ENCODE measurements at regions of chr10 and their contacts with region 1.

Region 1: GRCh38 chr10:102713814-102714620 is at the start of gene ARL3:
- DNase-seq: peak; percentile 93 to 97 (median 95)
- ATAC-seq: peak; percentile 91
- H3K4me3 ChIP-seq: peak within 1 kb of the TSS; percentile 95
- H3K27ac ChIP-seq: peak within 1 kb of the TSS; percentile 83
- H3K4me1 ChIP-seq: peaks cover 20% of the 10 kb centered on the region in 2 experiments; a peak in 4 of 5 replicates
- H3K27me3 ChIP-seq: no peaks in the 10 kb centered on the region
- CTCF ChIP-seq: peak in 1 of 3 experiments; percentile 51; a peak in 3 of 6 replicates
- EP300 ChIP-seq: no peak
- POLR2A ChIP-seq: no peak
- RAD21 ChIP-seq: no peak
- polyA plus RNA-seq, gene ARL3: 8.2 to 8.9 TPM

Region 2: GRCh38 chr10:102673819-102674511 is 40.1 kb before region 1 on chr10:
- CTCF ChIA-PET with region 1: no interaction called
- POLR2A ChIA-PET with region 1: interaction called, 4 read pairs
- in situ Hi-C with region 1: no loop called
- intact Hi-C with region 1: loop called (anchors 5 kb)
- DNase-seq: peak; percentile 78 to 80 (median 78)
- ATAC-seq: peak; percentile 75
- H3K4me3 ChIP-seq: peak overlapping the region; percentile 2; the same call in 1 of the 2 replicates
- H3K27ac ChIP-seq: no peak overlapping the region
- H3K4me1 ChIP-seq: peaks cover 35 to 47% of the 10 kb centered on the region in 2 experiments
- H3K27me3 ChIP-seq: no peaks in the 10 kb centered on the region
- CTCF ChIP-seq: no peak
- EP300 ChIP-seq: peak; percentile 57; the same call in 1 of the 2 replicates
- POLR2A ChIP-seq: no peak
- RAD21 ChIP-seq: no peak

Region 3: GRCh38 chr10:102853944-102854694 is 140.1 kb after region 1 on chr10 and contains the start of gene BORCS7:
- CTCF ChIA-PET with region 1: no interaction called
- POLR2A ChIA-PET with region 1: no interaction called
- in situ Hi-C with region 1: no loop called
- intact Hi-C with region 1: no loop called
- DNase-seq: peak; percentile 71 to 94 (median 78)
- ATAC-seq: peak; percentile 98
- H3K4me3 ChIP-seq: peak within 1 kb of the TSS; percentile 95
- H3K27ac ChIP-seq: peak within 1 kb of the TSS; percentile 99
- H3K4me1 ChIP-seq: peaks cover 7 to 20% of the 10 kb centered on the region in 2 experiments; a peak in 3 of 5 replicates
- H3K27me3 ChIP-seq: no peaks in the 10 kb centered on the region
- CTCF ChIP-seq: no peak
- EP300 ChIP-seq: peak; percentile 56; the same call in 1 of the 2 replicates
- POLR2A ChIP-seq: peak; percentile 94
- RAD21 ChIP-seq: no peak
- polyA plus RNA-seq, gene BORCS7: 14.0 to 17.0 TPM

Measured in K562 (cell line).